ENCODE measurements at regions of chr11 and their contacts with region 1.

Region 1: DNA sequence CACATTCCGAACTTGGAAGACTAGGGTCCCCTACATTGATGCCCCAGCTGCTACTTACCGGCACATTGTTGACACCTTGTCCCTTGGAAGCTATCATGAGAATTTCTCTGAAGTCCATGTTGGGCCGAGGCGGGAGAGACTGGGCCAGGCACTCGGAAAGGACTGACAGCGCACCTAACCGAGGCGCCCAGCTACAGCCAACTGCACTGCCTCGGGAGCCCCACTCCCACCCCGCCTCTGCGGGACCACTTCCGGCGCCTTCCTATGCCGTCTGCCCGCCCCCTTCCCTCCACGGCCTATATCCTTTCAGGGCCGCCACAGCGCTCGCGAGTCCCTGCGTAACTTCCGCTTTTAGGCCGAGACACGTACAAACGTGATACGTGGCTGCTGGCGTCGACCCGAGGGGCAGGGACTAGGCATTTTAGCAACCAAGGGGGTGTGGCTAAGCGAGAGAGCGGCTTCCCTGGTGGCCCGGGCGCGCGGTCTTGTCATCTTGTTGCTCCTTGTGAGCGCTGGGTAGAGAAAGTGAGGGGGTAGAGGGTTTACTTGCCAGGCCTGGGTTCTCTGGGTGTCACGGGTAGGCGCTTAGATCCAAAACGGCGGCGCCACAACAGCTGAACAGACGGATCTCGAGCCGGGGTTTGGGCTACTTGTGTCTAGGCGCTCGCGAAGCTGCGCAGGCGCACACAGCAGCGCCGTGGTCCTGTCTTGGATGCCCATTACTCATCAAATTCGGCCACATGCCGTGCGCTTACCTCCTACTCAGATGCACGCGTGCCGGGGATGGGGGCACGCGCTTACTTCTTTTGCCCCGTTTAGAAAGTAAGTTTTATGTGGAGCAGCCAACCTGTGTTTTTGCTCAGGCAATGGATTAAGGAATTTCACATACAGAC is at the start of gene SPTY2D1:
- DNase-seq: peak; percentile 99 to 100
- H3K4me3 ChIP-seq: peak within 1 kb of the TSS; percentile 84 to 99
- H3K27ac ChIP-seq: peak within 1 kb of the TSS; percentile 96
- H3K4me1 ChIP-seq: peaks cover 0 to 12% of the 10 kb centered on the region in 2 donors
- H3K27me3 ChIP-seq: no peaks in the 10 kb centered on the region
- CTCF ChIP-seq: no peak
- total RNA-seq, gene SPTY2D1: 7.8 TPM

Region 2: GRCh38 chr11:17077520-17078401 is 1556.6 kb before region 1 on chr11 and contains the start of gene RPS13:
- intact Hi-C with region 1: loop called (anchors 5 kb)
- DNase-seq: peak; percentile 90 to 98
- H3K4me3 ChIP-seq: peak within 1 kb of the TSS; percentile 87 to 97
- H3K27ac ChIP-seq: peak within 1 kb of the TSS; percentile 92 to 93
- H3K4me1 ChIP-seq: peaks cover 8 to 23% of the 10 kb centered on the region in 2 donors
- H3K27me3 ChIP-seq: no peaks in the 10 kb centered on the region
- CTCF ChIP-seq: no peak
- total RNA-seq, gene RPS13: 987 TPM

Region 3: GRCh38 chr11:18321980-18322711 is 312.2 kb before region 1 on chr11 and contains the starts of genes GTF2H1 and HPS5:
- intact Hi-C with region 1: loop called (anchors 1 kb)
- DNase-seq: peak; percentile 87 to 98
- H3K4me3 ChIP-seq: peak within 1 kb of the TSS; percentile 65 to 93
- H3K27ac ChIP-seq: peak within 1 kb of the TSS; percentile 93 to 97
- H3K4me1 ChIP-seq: peaks cover 17 to 29% of the 10 kb centered on the region in 2 donors
- H3K27me3 ChIP-seq: no peaks in the 10 kb centered on the region
- CTCF ChIP-seq: no peak
- total RNA-seq, gene GTF2H1: 33.7 TPM
- total RNA-seq, gene HPS5: 31.7 TPM

Region 4: DNA sequence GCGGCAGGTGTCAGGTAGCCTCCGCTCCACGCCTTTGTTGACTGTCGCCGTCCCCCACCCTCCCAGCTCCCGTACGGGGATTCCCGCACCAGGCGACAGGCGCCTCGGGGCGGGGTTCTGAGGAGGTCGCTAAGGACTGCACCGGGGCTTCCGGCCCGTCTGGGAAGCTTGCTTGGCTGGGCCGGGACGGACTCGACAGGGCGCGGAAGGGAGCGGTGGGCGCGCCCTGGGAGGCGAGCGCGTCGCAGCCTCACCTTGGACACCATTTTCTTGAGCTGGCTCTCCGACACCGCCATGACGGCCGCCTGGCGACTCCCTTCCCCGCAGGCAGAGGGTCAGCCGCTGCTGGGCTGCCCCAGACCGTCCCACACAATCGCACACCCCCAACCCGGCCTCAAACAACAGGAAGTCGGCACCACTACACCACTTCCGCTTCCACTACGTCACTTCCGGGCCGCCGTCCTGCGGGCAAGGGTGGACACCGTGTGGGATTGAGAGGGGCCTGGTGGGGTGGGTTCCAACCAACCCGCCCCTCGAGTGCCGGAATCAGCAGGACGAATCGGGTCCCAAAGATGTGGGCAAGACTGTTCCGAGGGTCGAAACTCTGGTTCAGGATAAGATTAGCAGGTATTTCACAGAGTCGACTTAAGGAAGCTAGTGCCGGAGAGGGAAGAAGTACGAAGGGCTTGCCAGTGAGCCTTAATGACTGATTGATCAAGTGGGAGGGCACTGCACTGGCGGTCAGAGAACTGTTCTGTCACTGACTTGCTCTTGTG is 107.7 kb before region 1 on chr11 and contains the start of gene TSG101:
- intact Hi-C with region 1: loop called (anchors 1 kb)
- DNase-seq: peak; percentile 60 to 96
- H3K4me3 ChIP-seq: peak within 1 kb of the TSS; percentile 79 to 93
- H3K27ac ChIP-seq: peak within 1 kb of the TSS; percentile 90 to 94
- H3K4me1 ChIP-seq: peaks cover 0 to 7% of the 10 kb centered on the region in 2 donors
- H3K27me3 ChIP-seq: no peaks in the 10 kb centered on the region
- CTCF ChIP-seq: no peak
- total RNA-seq, gene TSG101: 20.3 TPM

Region 5: DNA sequence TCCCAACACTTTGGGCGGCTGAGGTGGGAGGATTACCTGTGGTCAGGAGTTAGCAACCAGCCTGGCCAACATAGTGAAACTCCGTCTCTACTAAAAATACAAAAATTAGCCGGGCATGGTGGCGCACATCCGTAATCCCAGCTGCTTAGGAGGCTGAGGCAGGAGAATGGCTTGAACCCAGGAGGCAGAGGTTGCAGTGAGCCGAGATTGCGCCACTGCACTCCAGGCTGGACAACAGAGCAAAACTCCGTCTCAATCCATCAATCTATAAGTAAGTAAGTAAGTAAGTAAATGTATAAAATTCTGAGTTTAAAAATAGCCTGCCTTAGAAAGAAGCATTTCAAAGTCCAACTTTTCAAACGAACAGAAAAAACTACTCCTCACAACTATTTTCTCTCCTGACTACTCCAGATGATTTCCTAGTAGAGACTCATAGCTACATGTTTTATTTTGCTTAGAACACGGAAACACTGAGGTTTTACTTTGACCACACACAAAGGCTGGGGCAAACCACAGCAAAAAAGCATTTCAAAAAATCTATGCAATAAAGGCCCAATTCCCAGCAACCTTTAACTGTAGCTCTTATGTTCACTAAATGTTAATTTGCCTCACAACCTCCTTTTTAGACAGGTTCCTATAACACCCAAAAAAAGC is 16.6 kb before region 1 on chr11:
- intact Hi-C with region 1: loop called (anchors 2 kb)
- DNase-seq: no peak
- H3K4me3 ChIP-seq: peak overlapping the region in 1 of 2 donors; percentile 43
- H3K27ac ChIP-seq: peak overlapping the region; percentile 71 to 76
- H3K4me1 ChIP-seq: peaks cover 4 to 12% of the 10 kb centered on the region in 2 donors
- H3K27me3 ChIP-seq: no peaks in the 10 kb centered on the region
- CTCF ChIP-seq: no peak

Region 6: DNA sequence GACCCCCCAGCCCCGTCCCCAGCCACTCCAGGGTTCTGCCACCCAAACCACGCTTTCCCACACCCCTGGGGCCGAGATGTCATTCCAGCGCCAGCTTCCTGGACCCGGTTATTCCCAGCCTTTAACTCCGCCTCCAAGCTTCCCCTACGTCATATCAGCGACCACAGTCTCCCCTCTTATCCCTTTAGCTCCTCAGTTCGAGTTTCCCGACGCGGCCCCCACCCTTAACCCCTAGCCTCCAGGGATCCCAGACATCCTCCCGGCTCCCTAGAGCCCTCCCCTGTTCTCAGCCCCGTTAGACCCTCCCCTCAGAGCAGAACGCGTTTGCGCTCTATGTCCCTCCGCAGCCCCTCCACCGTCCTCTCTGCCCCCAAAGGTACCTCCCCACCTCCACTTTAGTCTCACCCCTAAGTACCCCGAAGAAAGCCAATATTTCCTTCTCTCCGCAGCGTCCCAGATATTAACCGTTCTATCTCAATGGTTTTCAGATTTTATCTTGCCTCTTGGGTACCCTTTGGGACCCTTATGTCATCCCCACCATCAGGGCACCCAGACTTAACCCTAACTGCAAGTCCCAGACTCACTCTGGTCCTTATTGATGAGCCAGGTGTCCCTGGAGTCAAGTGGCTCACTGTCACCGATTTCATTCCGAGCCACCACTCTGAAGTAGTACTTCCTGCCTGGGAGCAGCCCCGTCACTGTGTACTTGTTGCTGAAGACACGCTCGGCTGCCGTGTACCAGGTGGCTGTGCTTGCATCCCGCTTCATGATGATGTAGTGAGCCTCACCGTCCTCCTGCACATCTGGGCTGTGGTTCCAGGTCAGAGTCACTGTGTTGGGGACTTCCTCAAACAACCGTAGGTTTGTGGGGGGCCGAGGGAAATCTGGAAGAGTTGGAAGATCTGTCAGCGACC is 72.2 kb after region 1 on chr11:
- intact Hi-C with region 1: loop called (anchors 2 kb)
- DNase-seq: peak in 1 of 2 donors; percentile 84
- H3K4me3 ChIP-seq: peak overlapping the region; percentile 48 to 70
- H3K27ac ChIP-seq: peak overlapping the region; percentile 79 to 88
- H3K4me1 ChIP-seq: no peaks in the 10 kb centered on the region
- H3K27me3 ChIP-seq: no peaks in the 10 kb centered on the region
- CTCF ChIP-seq: no peak